ENCODE measurements at regions of chr2 and their contacts with region 1.

Region 1: DNA sequence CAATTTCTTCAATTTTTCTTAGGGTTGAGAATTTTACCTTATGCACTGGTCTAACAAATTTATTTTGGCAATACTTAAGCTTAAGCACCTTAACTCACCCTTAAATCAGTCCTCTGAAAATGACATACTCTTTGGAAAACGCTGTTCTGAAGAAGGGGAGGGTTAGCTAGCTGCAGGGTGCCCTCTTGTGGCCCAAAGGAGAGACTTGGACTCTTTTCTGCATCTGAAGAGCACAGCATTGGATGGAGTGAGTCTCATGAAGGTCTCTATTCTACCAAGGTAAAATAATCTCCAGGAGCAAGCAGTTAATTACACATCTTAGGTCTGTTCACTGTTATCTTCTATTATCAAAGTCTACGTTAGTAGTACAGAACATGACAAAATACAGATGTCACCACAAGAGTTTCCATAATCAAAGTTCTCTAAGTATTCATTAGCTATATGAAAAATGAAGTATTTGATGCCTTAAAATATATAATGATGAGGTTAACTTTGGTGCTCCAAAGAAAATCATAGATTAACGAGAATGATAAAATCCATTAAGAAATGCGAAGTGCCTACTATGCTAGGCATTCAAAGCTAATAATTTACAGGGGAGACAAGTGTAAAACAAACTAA is 24.4 kb downstream of the PUM2 start:
- DNase-seq: peak; percentile 50 to 66
- ATAC-seq: peak; percentile 97 to 98
- H3K4me3 ChIP-seq: no peak overlapping the region
- H3K27ac ChIP-seq: no peak overlapping the region
- H3K4me1 ChIP-seq: peaks cover 21% of the 10 kb centered on the region
- CTCF ChIP-seq: peak; percentile 95
- EP300 ChIP-seq: no peak
- POLR2A ChIP-seq: no peak
- RAD21 ChIP-seq: peak; percentile 69

Region 2: GRCh38 chr2:20291106-20291564 is 35.1 kb before region 1 on chr2:
- CTCF ChIA-PET with region 1: interaction called, 15 read pairs
- POLR2A ChIA-PET with region 1: no interaction called
- DNase-seq: peak; percentile 91 to 93
- ATAC-seq: peak; percentile 100
- H3K4me3 ChIP-seq: no peak overlapping the region
- H3K27ac ChIP-seq: peak overlapping the region in 1 of 2 experiments; percentile 33; a peak in 1 of 6 replicates
- H3K4me1 ChIP-seq: peaks cover 23% of the 10 kb centered on the region
- CTCF ChIP-seq: peak; percentile 94
- EP300 ChIP-seq: no peak
- POLR2A ChIP-seq: no peak
- RAD21 ChIP-seq: peak; percentile 63 to 64

Region 3: GRCh38 chr2:20304411-20304810 is 21.9 kb before region 1 on chr2:
- CTCF ChIA-PET with region 1: interaction called, 26 read pairs
- POLR2A ChIA-PET with region 1: no interaction called
- DNase-seq: no peak
- ATAC-seq: no peak
- H3K4me3 ChIP-seq: no peak overlapping the region
- H3K27ac ChIP-seq: no peak overlapping the region
- H3K4me1 ChIP-seq: no peaks in the 10 kb centered on the region
- CTCF ChIP-seq: no peak
- EP300 ChIP-seq: no peak
- POLR2A ChIP-seq: no peak
- RAD21 ChIP-seq: no peak

Region 4: DNA sequence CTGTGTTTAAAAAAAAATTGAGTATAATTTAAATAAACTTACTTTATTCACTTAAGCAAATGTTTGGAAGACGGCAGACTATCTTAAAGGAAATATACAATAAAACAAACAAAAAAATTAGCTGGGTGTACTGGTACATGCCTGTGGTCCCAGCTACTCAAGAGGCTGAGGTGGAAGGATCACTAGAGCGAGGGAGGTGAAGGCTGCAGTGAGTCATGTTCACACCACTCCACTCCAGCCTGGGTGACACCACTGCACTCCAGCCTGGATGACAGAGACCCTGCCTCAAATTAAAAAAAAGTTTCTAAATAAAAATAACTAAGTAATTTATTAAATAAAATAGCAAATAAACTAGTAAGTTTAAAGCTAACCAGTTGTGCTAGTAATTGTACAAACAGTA is 16.9 kb after region 1 on chr2:
- CTCF ChIA-PET with region 1: interaction called, 44 read pairs
- POLR2A ChIA-PET with region 1: no interaction called
- DNase-seq: no peak
- ATAC-seq: peak in 1 of 2 experiments; percentile 48; a peak in 2 of 6 replicates
- H3K4me3 ChIP-seq: no peak overlapping the region
- H3K27ac ChIP-seq: no peak overlapping the region
- H3K4me1 ChIP-seq: peaks cover 58% of the 10 kb centered on the region
- CTCF ChIP-seq: no peak
- EP300 ChIP-seq: no peak
- POLR2A ChIP-seq: no peak
- RAD21 ChIP-seq: no peak

Region 5: GRCh38 chr2:20532634-20533437 is 206.6 kb after region 1 on chr2:
- CTCF ChIA-PET with region 1: no interaction called
- POLR2A ChIA-PET with region 1: no interaction called
- DNase-seq: peak in 1 of 2 experiments; percentile 32
- ATAC-seq: peak in 1 of 2 experiments; percentile 37; a peak in 3 of 6 replicates
- H3K4me3 ChIP-seq: no peak overlapping the region
- H3K27ac ChIP-seq: no peak overlapping the region; a peak in 1 of 6 replicates
- H3K4me1 ChIP-seq: peaks cover 17% of the 10 kb centered on the region
- CTCF ChIP-seq: no peak
- EP300 ChIP-seq: no peak
- POLR2A ChIP-seq: no peak
- RAD21 ChIP-seq: no peak

Measured in A549 (cell line).